ENCODE measurements at regions of chr3 and their contacts with region 1.

Region 1: GRCh38 chr3:172332256-172333041 is 115.8 kb downstream of the GHSR start:
- DNase-seq: no peak
- H3K4me3 ChIP-seq: no peak overlapping the region
- H3K27ac ChIP-seq: peak overlapping the region; percentile 58
- H3K27me3 ChIP-seq: no peaks in the 10 kb centered on the region
- CTCF ChIP-seq: peak; percentile 96

Region 2: DNA sequence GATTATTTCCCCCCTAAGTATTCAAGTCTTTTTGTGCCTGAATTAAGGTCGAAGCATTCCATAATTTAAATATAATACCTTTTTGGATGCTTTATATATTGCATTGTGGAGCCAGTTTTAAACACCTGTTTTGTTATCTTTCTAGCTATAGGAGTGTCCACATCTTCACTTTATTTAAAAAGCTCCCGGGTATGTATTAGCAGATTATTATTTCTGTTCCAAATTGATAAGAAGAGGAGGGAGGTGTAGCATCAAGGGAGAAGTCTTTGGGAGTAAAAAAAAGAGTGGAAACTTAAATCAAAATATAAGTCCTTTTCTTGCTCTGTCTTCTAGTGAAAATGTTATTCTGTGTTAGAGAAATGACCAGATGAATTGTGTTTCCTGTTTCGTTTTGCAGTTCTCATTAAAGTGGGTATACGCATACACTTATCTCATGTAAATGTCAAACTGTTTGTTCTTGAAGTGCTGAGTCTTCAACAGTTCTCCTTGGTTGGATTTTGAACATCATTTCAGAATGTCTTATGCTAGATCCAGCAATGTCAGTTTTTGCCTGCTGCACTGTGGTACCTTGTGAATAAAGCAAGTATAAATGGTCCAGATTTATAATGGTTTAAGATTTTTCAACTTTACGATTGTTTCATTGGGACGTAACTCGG is 187.3 kb before region 1 on chr3:
- CTCF ChIA-PET with region 1: interaction called, 15 read pairs
- POLR2A ChIA-PET with region 1: no interaction called
- DNase-seq: no peak
- H3K4me3 ChIP-seq: no peak overlapping the region
- H3K27ac ChIP-seq: no peak overlapping the region
- H3K27me3 ChIP-seq: no peaks in the 10 kb centered on the region
- CTCF ChIP-seq: no peak

Region 3: DNA sequence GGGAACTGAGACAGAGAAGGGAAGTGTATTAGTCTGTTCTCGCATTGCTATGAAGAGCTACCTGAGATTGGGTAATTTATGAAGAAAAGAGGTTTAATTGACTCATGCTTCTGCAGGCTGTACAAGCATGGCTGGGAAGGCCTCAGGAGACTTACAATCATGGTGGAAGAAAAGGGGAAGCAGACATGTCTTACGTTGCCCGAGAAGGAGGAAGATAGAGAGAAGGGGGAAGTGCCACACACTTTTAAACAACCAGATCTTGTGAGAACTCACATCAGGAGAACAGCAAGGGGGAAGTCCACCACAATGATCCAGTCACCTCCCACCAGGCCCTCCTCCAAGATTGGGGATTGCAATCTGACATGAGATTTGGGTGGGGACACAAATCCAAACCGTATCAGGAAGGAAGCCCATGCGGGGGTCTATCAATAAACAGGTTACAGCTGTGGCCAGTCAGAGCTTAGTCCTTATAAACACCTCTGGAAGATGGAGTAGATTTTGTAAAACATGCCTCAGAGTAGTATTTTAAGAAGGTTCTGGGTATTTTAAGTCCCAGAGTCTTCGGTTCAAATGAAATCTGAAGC is 38.1 kb before region 1 on chr3:
- CTCF ChIA-PET with region 1: interaction called, 11 read pairs
- POLR2A ChIA-PET with region 1: no interaction called
- DNase-seq: no peak
- H3K4me3 ChIP-seq: no peak overlapping the region
- H3K27ac ChIP-seq: no peak overlapping the region
- H3K27me3 ChIP-seq: no peaks in the 10 kb centered on the region
- CTCF ChIP-seq: no peak

Region 4: GRCh38 chr3:172317984-172318383 is 14.5 kb before region 1 on chr3:
- CTCF ChIA-PET with region 1: interaction called, 34 read pairs
- POLR2A ChIA-PET with region 1: no interaction called
- DNase-seq: peak; percentile 84
- H3K4me3 ChIP-seq: no peak overlapping the region
- H3K27ac ChIP-seq: peak overlapping the region; percentile 91
- H3K27me3 ChIP-seq: no peaks in the 10 kb centered on the region
- CTCF ChIP-seq: no peak

Region 5: DNA sequence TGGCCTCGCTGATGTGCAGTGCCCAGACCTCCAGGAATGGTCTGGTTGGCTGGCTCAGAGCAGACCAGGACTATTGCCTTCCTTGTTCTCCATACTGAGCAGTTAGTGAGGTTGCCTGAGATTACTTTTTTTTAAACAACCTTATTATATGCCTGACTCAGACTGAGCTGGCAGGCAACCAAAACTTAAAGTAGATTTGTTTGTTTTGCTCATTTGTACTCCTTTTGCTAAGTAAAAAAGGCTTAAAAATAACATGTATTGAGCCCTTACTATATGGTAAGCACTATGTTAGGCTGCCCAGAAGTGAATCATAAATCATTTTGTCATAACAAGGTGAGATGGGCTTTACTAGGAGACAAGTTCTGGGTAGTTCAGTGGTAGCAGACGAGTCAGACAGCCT is 23.4 kb after region 1 on chr3:
- CTCF ChIA-PET with region 1: interaction called, 21 read pairs
- POLR2A ChIA-PET with region 1: no interaction called
- DNase-seq: peak; percentile 88
- H3K4me3 ChIP-seq: no peak overlapping the region
- H3K27ac ChIP-seq: no peak overlapping the region
- H3K27me3 ChIP-seq: no peaks in the 10 kb centered on the region
- CTCF ChIP-seq: no peak

Region 6: DNA sequence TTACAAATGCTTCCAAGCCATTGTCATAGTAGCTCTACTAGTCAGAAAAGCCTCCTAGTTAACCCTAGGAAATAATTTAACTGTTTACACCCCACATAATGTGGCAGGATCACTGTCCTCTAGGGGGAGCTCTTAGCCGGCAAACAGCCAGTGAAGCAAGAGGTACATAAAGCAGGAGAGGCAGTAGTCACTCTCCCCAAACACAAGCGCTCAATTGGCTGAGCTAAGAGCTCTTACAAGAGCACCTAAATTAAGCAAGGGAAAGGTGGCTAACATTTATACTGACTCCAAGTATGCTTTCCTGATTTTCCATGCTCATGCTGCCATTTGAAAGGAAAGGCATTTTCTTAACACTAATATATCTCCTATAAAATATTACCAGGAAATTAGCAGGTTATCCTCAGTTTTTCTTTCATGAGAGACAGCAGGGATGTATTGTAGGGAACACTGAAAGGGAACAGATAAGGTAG is 340.8 kb after region 1 on chr3:
- CTCF ChIA-PET with region 1: interaction called, 21 read pairs
- POLR2A ChIA-PET with region 1: no interaction called
- DNase-seq: no peak
- H3K4me3 ChIP-seq: no peak overlapping the region
- H3K27ac ChIP-seq: no peak overlapping the region
- H3K27me3 ChIP-seq: no peaks in the 10 kb centered on the region
- CTCF ChIP-seq: peak; percentile 77